BJ (cell line): ENCODE measurements at regions of chrX and their contacts with region 1.

Region 1: GRCh38 chrX:97389761-97390192 is 506.1 kb downstream of the RPA4 start:
- DNase-seq: peak; percentile 20
- H3K4me3 ChIP-seq: no peak overlapping the region
- H3K27me3 ChIP-seq: no peaks in the 10 kb centered on the region
- CTCF ChIP-seq: no peak

Region 2: GRCh38 chrX:96443658-96444057 is 946.1 kb before region 1 on chrX:
- CTCF ChIA-PET with region 1: no interaction called
- POLR2A ChIA-PET with region 1: interaction called, 11 read pairs
- DNase-seq: no peak
- H3K4me3 ChIP-seq: no peak overlapping the region
- H3K27me3 ChIP-seq: no peaks in the 10 kb centered on the region
- CTCF ChIP-seq: no peak

Region 3: GRCh38 chrX:97252111-97252510 is 137.7 kb before region 1 on chrX:
- CTCF ChIA-PET with region 1: no interaction called
- POLR2A ChIA-PET with region 1: no interaction called
- DNase-seq: no peak
- H3K4me3 ChIP-seq: no peak overlapping the region
- H3K27me3 ChIP-seq: no peaks in the 10 kb centered on the region
- CTCF ChIP-seq: no peak

Region 4: GRCh38 chrX:97616883-97617530 is 227.2 kb after region 1 on chrX:
- CTCF ChIA-PET with region 1: no interaction called
- POLR2A ChIA-PET with region 1: no interaction called
- DNase-seq: peak; percentile 6
- H3K4me3 ChIP-seq: no peak overlapping the region
- H3K27me3 ChIP-seq: no peaks in the 10 kb centered on the region
- CTCF ChIP-seq: no peak